Panc1 (cell line): ENCODE measurements at regions of chr16 and their contacts with region 1.

Region 1: DNA sequence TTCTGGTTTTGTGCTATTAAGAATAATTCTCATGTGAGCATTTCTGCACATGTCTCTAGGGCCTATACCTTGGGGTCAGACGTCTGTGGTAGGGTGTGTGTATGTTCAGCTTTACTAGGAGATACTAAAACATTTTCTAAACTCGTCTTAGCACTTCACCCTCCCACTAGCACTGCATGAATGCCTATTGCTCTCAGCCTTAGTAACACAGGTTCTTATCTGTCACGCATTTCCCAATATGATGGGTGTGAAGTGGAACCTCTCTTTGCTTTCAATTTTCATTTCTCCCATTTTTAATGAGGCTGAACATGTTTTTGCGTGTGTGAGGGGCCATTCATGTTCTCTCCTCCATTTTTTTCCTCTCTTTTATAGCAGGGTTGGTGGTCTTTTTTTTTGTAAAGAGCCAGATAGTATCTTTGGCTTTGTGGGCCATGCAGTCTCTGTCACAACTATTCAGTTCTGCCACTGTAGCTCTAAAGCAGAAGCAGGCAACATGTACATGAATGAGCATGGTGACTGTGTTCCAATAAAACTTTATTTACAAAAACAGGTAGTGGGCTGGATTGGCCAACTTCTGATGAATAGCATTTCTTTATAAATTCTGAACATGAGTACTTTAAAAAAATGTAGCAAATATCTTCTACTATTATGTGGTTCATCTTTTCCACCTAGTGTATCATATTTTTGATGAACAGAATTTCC is 354.0 kb downstream of the XYLT1 start:
- DNase-seq: no peak
- ATAC-seq: no peak
- H3K4me3 ChIP-seq: no peak overlapping the region
- H3K27ac ChIP-seq: no peak overlapping the region
- H3K4me1 ChIP-seq: no peaks in the 10 kb centered on the region
- H3K27me3 ChIP-seq: 0 out of 2 replicates have a peak, but pooled peaks cover 5% of the 10 kb centered on the region
- CTCF ChIP-seq: no peak

Region 2: DNA sequence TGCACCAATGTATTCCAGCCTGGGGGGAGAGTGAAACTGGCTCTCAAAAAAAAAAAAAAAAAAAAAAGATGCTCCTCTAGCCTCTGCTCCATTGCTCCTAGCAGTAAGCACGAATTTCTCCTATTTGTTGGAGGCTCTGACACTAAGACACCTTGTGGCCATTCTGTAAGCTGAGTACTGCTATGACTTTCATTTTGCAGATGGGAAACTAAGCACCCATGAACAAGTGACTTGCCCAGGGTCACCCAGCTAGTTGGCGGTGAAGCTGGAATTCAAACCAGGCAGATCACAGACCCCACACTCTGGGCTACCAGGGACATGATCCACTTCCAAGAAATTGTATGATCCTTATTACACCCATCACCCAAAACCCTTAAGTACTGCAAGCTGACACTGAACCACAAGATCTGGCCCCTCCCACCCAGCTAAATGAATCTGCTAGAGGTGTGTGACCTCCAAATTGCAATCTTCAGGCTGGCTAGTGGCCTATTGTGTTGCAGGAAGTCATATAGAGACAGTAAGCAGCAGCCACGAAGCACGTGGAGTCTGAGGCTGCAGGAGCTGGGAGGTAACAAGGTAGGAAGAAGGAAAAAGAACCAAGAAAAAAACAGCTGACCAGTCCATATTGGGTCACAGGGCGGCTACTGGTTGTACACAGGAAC is 144.6 kb after region 1 on chr16:
- CTCF ChIA-PET with region 1: no interaction called
- POLR2A ChIA-PET with region 1: interaction called, 17 read pairs
- in situ Hi-C with region 1: no loop called
- intact Hi-C with region 1: no loop called
- DNase-seq: no peak
- ATAC-seq: no peak
- H3K4me3 ChIP-seq: no peak overlapping the region
- H3K27ac ChIP-seq: no peak overlapping the region
- H3K4me1 ChIP-seq: no peaks in the 10 kb centered on the region
- H3K27me3 ChIP-seq: no peaks in the 10 kb centered on the region; the same call in 1 of the 2 replicates
- CTCF ChIP-seq: no peak